Activated CD4-positive, alpha-beta T cell treated with anti-CD3 and anti-CD28 coated beads, Interleukin-2, amount 10 ng/mL, durations not matched to agents 24 days and 14 days (primary cell): ENCODE measurements at regions of chr20 and their contacts with region 1.

Region 1: GRCh38 chr20:22586645-22587310 is 2.4 kb upstream of the FOXA2 start:
- DNase-seq: peak; percentile 68
- H3K4me3 Mint-ChIP-seq: no peak overlapping the region
- H3K27ac Mint-ChIP-seq: no peak overlapping the region
- H3K4me1 Mint-ChIP-seq: no peaks in the 10 kb centered on the region
- H3K27me3 Mint-ChIP-seq: peaks cover 55% of the 10 kb centered on the region

Region 2: GRCh38 chr20:21513881-21514540 is 1072.8 kb before region 1 on chr20 and contains the start of gene NKX2-2:
- intact Hi-C with region 1: loop called (anchors 5 kb)
- DNase-seq: no peak
- H3K4me3 Mint-ChIP-seq: no peak within 1 kb of the TSS
- H3K27ac Mint-ChIP-seq: peak within 1 kb of the TSS; percentile 48
- H3K4me1 Mint-ChIP-seq: peaks cover 25% of the 10 kb centered on the region
- H3K27me3 Mint-ChIP-seq: peaks cover 74% of the 10 kb centered on the region
- total RNA-seq, gene NKX2-2: not detected in 2 replicates

Region 3: DNA sequence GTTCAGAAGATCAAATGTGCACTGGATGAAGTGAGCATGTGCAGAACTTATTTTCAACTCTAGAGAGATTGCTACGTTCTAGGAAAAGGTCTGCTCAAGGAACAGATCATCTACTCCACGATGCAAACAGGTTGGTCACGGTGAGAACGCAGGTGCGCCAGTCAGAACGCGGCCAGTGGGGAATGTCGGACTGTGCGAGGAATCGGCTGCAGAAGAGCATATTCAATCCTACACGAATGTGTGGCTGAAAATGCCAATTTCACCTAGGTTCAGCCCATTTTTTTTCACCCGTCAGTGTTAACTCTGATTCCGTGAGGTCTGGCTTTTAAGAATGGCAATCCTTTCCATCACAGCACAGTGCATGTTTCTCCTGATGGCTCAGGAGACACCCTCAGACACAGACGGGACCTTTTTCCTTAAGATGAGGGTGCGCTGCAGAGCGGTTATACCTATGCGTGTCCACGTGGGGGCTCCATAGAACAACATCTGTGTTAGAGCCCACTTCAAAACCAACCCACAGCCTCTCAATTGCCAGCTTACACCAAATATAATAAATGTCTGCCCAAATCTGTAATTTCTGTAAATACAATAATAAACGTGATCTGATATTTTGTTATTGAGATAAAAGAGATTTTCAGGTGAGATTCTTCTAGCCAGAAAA is 252.8 kb before region 1 on chr20:
- intact Hi-C with region 1: loop called (anchors 5 kb)
- DNase-seq: peak; percentile 81
- H3K4me3 Mint-ChIP-seq: no peak overlapping the region
- H3K27ac Mint-ChIP-seq: no peak overlapping the region
- H3K4me1 Mint-ChIP-seq: no peaks in the 10 kb centered on the region
- H3K27me3 Mint-ChIP-seq: peaks cover 2% of the 10 kb centered on the region

Region 4: DNA sequence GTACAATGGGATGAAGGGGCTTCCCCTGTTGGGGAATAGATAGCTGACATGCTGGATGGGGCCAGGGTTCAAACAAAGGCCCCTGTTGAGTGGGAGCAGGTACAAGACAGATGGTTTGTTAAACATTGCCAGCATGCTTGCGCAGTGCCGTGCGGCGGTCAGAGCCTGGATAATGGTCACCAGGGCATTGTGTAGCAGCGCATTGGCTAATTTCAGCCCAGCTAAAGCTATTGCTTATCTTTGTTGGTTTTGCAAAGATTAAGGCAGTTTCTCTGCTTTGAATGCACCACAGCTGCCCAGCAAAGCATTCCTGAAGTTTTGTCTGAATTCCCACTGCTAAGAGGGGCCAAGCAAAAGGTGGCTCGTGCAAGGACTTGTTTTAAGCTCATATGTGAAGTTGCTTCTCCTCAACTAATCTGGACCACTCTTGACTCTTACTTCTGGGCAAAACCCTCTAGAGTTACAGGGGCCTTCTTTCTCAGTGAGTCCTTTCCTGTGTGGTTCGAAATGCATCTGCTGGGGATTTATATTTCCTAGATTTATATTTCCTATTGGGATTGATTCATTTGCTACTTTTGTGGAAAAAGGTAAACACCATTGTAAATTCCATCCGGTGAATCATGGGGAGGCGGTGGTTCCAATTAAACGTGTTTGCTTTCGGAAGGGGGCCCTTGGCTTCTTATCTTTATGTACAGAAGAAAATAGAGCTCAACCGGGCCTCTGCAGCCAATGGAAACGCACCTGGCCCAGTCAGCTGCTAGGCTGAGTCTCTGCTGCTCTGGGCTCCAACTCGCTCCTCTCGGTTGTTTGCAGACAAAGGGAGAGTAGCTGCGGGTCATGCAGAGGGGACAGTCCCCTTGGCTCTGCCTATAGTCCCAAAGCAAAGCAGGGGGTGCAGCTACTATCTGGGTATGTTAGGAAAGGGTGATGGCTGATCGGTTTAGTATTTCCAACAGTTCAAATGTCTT is 74.6 kb before region 1 on chr20:
- intact Hi-C with region 1: no loop called
- DNase-seq: no peak
- H3K4me3 Mint-ChIP-seq: no peak overlapping the region
- H3K27ac Mint-ChIP-seq: no peak overlapping the region
- H3K4me1 Mint-ChIP-seq: no peaks in the 10 kb centered on the region
- H3K27me3 Mint-ChIP-seq: no peaks in the 10 kb centered on the region

Region 5: GRCh38 chr20:22601361-22602141 is 14.8 kb after region 1 on chr20:
- intact Hi-C with region 1: no loop called
- DNase-seq: no peak
- H3K4me3 Mint-ChIP-seq: no peak overlapping the region
- H3K27ac Mint-ChIP-seq: no peak overlapping the region
- H3K4me1 Mint-ChIP-seq: no peaks in the 10 kb centered on the region
- H3K27me3 Mint-ChIP-seq: no peaks in the 10 kb centered on the region